ENCODE measurements at regions of chr3 and their contacts with region 1.

Region 1: DNA sequence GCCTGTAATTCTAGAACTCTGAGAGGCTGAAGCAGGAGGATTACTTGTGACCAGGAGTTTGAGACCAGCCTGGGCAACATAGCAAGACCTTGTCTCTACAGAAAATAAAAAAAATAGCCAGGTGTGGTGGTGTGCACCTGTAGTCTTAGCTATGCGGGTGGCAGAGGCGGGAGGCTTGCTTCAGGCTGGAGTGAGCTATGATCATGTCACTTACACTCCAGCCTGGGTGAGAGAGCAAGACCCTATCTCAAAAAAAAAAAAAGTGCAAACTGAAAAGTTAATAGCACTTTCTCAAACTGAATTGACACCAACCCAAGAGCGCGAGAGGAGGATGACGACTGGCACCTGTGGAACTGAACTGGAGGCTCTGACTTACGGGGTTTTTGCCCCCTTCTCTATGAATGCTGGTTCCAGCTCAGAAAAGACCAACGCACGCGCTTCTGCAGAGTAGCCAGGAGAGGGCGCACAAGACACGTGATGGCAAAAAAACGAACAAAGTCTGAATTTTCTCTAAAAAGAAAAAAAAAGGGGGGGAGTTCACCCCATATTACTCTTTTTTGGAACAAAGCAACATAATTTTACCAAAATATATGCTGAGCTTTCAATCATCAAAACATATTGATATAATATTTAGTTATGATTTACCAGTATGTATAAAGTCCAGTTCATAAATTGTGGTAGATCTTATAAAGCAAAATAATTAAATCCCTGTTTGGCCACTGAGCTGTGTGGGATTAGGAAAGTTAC is 23.7 kb downstream of the CFAP92 start:
- DNase-seq: peak; percentile 80
- ATAC-seq: peak; percentile 64
- H3K4me3 ChIP-seq: no peak overlapping the region
- H3K4me3 Mint-ChIP-seq: no peak overlapping the region
- H3K27ac ChIP-seq: no peak overlapping the region
- H3K27ac Mint-ChIP-seq: no peak overlapping the region
- H3K4me1 ChIP-seq: peaks cover 14 to 15% of the 10 kb centered on the region in 2 donors
- H3K4me1 Mint-ChIP-seq: peaks cover 11% of the 10 kb centered on the region
- H3K27me3 ChIP-seq: no peaks in the 10 kb centered on the region
- H3K27me3 Mint-ChIP-seq: peaks cover 4% of the 10 kb centered on the region
- CTCF ChIP-seq: peak; percentile 97

Region 2: DNA sequence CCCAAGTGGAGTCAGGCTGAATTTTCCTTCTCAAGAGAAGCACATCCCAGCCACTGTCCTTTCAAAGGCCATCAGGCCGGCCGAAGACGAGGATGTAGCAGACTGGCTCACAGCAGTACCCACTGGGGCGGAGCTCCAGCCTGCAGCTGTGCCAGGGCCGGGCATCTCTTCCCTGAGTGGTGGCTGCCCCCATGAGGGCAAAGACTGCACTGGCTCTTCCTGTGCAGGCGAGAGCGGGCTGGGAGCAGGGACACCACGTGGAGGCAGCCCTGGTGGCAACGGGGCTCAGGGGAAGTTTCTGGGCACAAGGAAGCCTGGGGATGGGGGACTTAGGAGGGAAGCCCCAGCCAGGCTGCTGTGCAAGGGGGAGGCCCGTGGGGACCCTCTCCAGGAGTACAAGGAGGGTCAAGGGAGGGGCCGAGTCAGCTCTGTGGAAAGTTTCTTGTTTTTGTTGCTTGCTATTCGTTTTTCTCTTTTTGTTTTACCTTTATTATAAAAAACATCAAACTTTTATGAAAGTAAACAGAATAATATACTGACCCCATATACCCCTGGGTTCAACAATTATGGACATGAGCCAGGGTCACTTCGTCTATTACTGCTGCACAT is 385.6 kb before region 1 on chr3:
- CTCF ChIA-PET with region 1: no interaction called
- POLR2A ChIA-PET with region 1: no interaction called
- intact Hi-C with region 1: no loop called
- DNase-seq: peak; percentile 26
- ATAC-seq: peak; percentile 56
- H3K4me3 ChIP-seq: no peak overlapping the region
- H3K4me3 Mint-ChIP-seq: no peak overlapping the region
- H3K27ac ChIP-seq: no peak overlapping the region
- H3K27ac Mint-ChIP-seq: no peak overlapping the region
- H3K4me1 ChIP-seq: peaks cover 0 to 4% of the 10 kb centered on the region in 2 donors
- H3K4me1 Mint-ChIP-seq: no peaks in the 10 kb centered on the region
- H3K27me3 ChIP-seq: peaks cover 0 to 6% (median 0%) of the 10 kb centered on the region in 4 experiments
- H3K27me3 Mint-ChIP-seq: peaks cover 13% of the 10 kb centered on the region
- CTCF ChIP-seq: peak; percentile 10

Region 3: GRCh38 chr3:128824132-128824850 is 145.9 kb before region 1 on chr3:
- CTCF ChIA-PET with region 1: no interaction called
- POLR2A ChIA-PET with region 1: no interaction called
- intact Hi-C with region 1: no loop called
- DNase-seq: no peak
- ATAC-seq: no peak
- H3K4me3 ChIP-seq: no peak overlapping the region
- H3K4me3 Mint-ChIP-seq: no peak overlapping the region
- H3K27ac ChIP-seq: no peak overlapping the region
- H3K27ac Mint-ChIP-seq: no peak overlapping the region
- H3K4me1 ChIP-seq: no peaks in the 10 kb centered on the region
- H3K4me1 Mint-ChIP-seq: no peaks in the 10 kb centered on the region
- H3K27me3 ChIP-seq: no peaks in the 10 kb centered on the region
- H3K27me3 Mint-ChIP-seq: no peaks in the 10 kb centered on the region
- CTCF ChIP-seq: no peak

Region 4: DNA sequence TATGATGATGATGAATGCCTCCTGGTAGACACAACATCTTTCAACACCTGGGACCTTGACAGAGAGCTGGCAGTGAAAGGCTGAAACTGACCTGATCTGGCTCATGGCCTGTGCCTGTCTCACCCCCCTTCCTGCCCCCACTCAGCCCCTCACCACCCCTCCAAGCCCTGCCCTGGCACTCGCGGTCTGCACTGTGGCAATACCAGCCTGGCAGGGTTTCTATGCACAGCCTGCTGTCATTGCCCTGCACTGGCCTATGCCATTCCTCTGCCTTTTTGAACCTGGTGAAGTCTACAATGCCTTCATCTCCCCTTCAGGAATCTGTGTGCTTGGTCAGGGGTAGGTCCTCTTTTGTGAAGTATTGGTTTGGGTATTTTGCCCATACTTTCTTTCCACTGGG is 34.2 kb before region 1 on chr3:
- CTCF ChIA-PET with region 1: no interaction called
- POLR2A ChIA-PET with region 1: no interaction called
- intact Hi-C with region 1: no loop called
- DNase-seq: no peak
- ATAC-seq: no peak
- H3K4me3 ChIP-seq: no peak overlapping the region
- H3K4me3 Mint-ChIP-seq: no peak overlapping the region
- H3K27ac ChIP-seq: no peak overlapping the region
- H3K27ac Mint-ChIP-seq: no peak overlapping the region
- H3K4me1 ChIP-seq: no peaks in the 10 kb centered on the region
- H3K4me1 Mint-ChIP-seq: no peaks in the 10 kb centered on the region
- H3K27me3 ChIP-seq: peaks cover 0 to 5% (median 0%) of the 10 kb centered on the region in 4 experiments
- H3K27me3 Mint-ChIP-seq: peaks cover 20% of the 10 kb centered on the region
- CTCF ChIP-seq: no peak

Region 5: GRCh38 chr3:128984596-128984995 is 14.4 kb after region 1 on chr3:
- CTCF ChIA-PET with region 1: interaction called, 10 read pairs
- POLR2A ChIA-PET with region 1: no interaction called
- intact Hi-C with region 1: no loop called
- DNase-seq: no peak
- ATAC-seq: no peak
- H3K4me3 ChIP-seq: no peak overlapping the region
- H3K4me3 Mint-ChIP-seq: no peak overlapping the region
- H3K27ac ChIP-seq: no peak overlapping the region
- H3K27ac Mint-ChIP-seq: no peak overlapping the region
- H3K4me1 ChIP-seq: no peaks in the 10 kb centered on the region
- H3K4me1 Mint-ChIP-seq: peaks cover 2% of the 10 kb centered on the region
- H3K27me3 ChIP-seq: peaks cover 0 to 3% (median 0%) of the 10 kb centered on the region in 4 experiments
- H3K27me3 Mint-ChIP-seq: peaks cover 11% of the 10 kb centered on the region
- CTCF ChIP-seq: no peak

Region 6: DNA sequence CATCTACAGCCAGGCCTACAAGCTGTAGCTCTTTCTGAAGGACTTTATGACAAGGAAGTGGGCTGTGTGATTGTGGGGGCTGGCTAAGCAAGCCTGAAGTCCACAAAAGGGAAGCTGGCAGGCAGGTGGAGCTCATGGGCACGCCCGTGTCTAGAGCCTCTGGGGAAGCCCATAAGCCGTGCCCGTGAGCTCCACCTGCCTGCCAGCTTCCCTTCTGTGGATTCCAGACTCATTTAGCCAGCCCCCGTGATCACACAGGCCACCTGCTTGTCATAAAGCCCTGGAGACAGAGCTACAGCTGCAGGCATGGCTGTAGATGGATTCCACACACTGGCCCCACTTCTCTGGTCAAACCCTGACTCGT is 46.2 kb after region 1 on chr3:
- CTCF ChIA-PET with region 1: interaction called, 134 read pairs
- POLR2A ChIA-PET with region 1: interaction called, 8 read pairs
- intact Hi-C with region 1: loop called (anchors 1 kb)
- DNase-seq: peak; percentile 92
- ATAC-seq: peak; percentile 86
- H3K4me3 ChIP-seq: peak overlapping the region in 3 of 5 experiments; percentile 5 to 28 (median 18)
- H3K4me3 Mint-ChIP-seq: peak overlapping the region; percentile 79
- H3K27ac ChIP-seq: peak overlapping the region; percentile 85 to 96
- H3K27ac Mint-ChIP-seq: peak overlapping the region; percentile 97
- H3K4me1 ChIP-seq: peaks cover 33 to 35% of the 10 kb centered on the region in 2 donors
- H3K4me1 Mint-ChIP-seq: peaks cover 41% of the 10 kb centered on the region
- H3K27me3 ChIP-seq: no peaks in the 10 kb centered on the region
- H3K27me3 Mint-ChIP-seq: no peaks in the 10 kb centered on the region
- CTCF ChIP-seq: peak; percentile 41

Region 7: DNA sequence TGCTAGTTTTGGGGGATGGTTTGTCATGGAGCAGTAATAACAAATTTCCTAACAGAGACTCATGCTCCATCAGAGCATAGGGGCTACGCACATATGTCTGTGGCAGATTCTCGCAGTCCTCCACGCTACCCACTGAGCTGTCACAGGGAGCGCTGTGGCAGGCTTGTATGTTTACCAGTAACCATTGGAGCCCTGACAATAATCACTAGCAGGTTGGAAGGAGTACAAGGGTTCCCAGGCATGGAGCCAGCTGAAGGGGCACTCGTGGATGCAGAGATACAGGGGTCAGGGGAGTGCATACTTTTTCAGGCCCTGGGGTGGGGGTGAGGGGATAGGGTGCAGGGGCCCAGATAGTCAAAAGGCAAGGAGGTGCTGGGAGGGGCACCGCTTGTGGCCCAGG is 82.5 kb after region 1 on chr3:
- CTCF ChIA-PET with region 1: interaction called, 92 read pairs
- POLR2A ChIA-PET with region 1: no interaction called
- intact Hi-C with region 1: loop called (anchors 1 kb)
- DNase-seq: no peak
- ATAC-seq: no peak
- H3K4me3 ChIP-seq: no peak overlapping the region
- H3K4me3 Mint-ChIP-seq: no peak overlapping the region
- H3K27ac ChIP-seq: no peak overlapping the region
- H3K27ac Mint-ChIP-seq: no peak overlapping the region
- H3K4me1 ChIP-seq: peaks cover 4 to 7% of the 10 kb centered on the region in 2 donors
- H3K4me1 Mint-ChIP-seq: peaks cover 7% of the 10 kb centered on the region
- H3K27me3 ChIP-seq: peaks cover 0 to 10% (median 2%) of the 10 kb centered on the region in 4 experiments
- H3K27me3 Mint-ChIP-seq: peaks cover 31% of the 10 kb centered on the region
- CTCF ChIP-seq: no peak

Region 8: DNA sequence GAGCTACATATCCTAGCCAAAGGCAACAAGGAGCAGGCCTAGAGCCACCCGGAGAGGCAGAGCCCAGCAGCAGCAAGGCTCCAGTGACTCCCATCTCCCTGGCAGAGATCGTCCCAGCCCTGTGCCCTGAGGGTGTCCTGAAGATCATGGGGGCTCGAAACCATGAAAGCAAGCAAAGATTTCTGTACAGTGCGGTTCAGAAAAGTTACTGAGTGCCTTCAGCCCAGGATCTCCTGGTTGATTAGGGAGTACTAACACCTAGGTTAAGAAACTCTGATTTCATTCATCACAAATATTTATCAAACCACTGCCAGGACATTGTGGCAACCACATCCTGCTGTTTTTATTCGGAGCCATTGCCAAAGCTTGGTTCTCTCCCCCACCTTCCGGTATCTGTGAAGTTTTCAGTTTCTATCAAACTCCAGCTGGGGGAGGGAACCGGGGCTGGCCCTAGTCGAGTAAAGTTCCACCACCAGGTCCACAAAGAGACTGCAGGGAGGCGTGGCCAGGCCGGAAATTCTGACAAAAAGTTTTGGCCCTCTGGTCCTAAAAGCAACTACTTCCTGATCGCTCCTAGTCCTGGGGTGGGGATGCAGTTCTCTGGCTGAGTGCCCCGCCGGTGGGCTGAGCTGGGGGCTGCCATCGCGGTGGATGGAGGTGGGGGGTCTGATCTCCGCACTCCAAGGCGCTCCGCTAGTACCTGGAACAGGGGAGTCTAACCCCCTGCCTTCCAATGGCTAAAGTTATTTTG is 150.3 kb after region 1 on chr3:
- CTCF ChIA-PET with region 1: interaction called, 32 read pairs
- POLR2A ChIA-PET with region 1: interaction called, 3 read pairs
- intact Hi-C with region 1: no loop called
- DNase-seq: peak; percentile 93
- ATAC-seq: peak; percentile 61
- H3K4me3 ChIP-seq: peak overlapping the region; percentile 68 to 81 (median 76)
- H3K4me3 Mint-ChIP-seq: peak overlapping the region; percentile 88
- H3K27ac ChIP-seq: peak overlapping the region; percentile 61 to 62
- H3K27ac Mint-ChIP-seq: peak overlapping the region; percentile 84
- H3K4me1 ChIP-seq: peaks cover 42 to 46% of the 10 kb centered on the region in 2 donors
- H3K4me1 Mint-ChIP-seq: peaks cover 53% of the 10 kb centered on the region
- H3K27me3 ChIP-seq: no peaks in the 10 kb centered on the region
- H3K27me3 Mint-ChIP-seq: no peaks in the 10 kb centered on the region
- CTCF ChIP-seq: peak; percentile 30

Region 9: DNA sequence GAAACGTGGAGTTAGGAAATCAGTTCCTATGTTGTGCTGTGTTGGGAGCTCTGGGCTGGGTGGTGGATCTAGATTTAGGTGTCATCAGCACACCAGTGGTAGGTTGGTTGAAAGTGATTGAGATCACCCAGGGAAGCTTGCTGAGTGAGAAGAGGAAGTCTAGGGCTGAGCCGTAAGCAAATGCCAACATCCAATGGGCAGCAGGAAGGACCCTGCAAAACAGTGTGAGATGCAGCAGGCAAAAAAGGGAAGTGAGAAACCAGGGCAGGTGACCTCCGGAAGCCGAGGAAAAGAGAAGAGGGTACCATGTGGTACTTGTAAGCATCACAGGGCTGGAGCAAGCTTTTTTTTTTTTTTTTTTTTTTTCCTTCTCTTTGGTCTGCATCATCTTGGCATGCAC is 263.4 kb after region 1 on chr3:
- CTCF ChIA-PET with region 1: interaction called, 11 read pairs
- POLR2A ChIA-PET with region 1: no interaction called
- intact Hi-C with region 1: no loop called
- DNase-seq: peak; percentile 95
- ATAC-seq: peak; percentile 94
- H3K4me3 ChIP-seq: no peak overlapping the region
- H3K4me3 Mint-ChIP-seq: peak overlapping the region; percentile 50
- H3K27ac ChIP-seq: peak overlapping the region; percentile 71 to 87
- H3K27ac Mint-ChIP-seq: peak overlapping the region; percentile 97
- H3K4me1 ChIP-seq: peaks cover 28 to 36% of the 10 kb centered on the region in 2 donors
- H3K4me1 Mint-ChIP-seq: peaks cover 47% of the 10 kb centered on the region
- H3K27me3 ChIP-seq: no peaks in the 10 kb centered on the region
- H3K27me3 Mint-ChIP-seq: no peaks in the 10 kb centered on the region
- CTCF ChIP-seq: no peak

Region 10: DNA sequence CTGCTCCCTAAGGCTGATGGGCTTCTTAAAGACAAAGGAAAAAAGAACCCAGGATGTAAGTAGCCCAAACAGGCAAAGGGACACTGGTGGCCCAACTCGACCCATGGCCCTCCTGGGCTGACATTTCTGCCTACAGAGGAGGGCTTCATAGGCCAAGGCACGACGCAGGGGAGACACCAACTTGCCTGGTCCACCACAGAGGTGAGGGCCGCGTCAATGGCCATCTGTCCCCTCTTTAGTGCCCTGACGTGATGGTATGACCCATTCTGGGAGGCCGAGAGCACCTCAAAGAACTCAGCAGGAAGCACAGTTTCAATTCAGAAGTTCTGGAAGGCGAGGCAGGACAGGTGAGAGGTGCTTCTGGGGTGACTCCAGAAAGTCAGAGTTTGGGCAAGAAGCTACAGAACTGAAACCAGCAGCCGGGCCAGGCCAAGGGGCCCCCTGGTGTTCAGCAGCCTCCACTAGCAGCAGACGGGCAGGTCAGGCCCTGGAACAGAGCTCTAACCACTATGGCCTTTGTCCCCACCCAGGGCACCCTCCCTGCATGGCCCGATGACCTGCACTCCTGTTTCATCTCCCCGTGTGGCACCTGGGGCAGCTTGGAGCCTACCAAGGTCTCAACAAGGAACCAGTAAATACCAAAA is 353.6 kb after region 1 on chr3:
- CTCF ChIA-PET with region 1: interaction called, 41 read pairs
- POLR2A ChIA-PET with region 1: no interaction called
- intact Hi-C with region 1: loop called (anchors 1 kb)
- DNase-seq: peak; percentile 69
- ATAC-seq: peak; percentile 82
- H3K4me3 ChIP-seq: no peak overlapping the region
- H3K4me3 Mint-ChIP-seq: no peak overlapping the region
- H3K27ac ChIP-seq: no peak overlapping the region
- H3K27ac Mint-ChIP-seq: no peak overlapping the region
- H3K4me1 ChIP-seq: peaks cover 2 to 5% of the 10 kb centered on the region in 2 donors
- H3K4me1 Mint-ChIP-seq: peaks cover 3% of the 10 kb centered on the region
- H3K27me3 ChIP-seq: peaks cover 0 to 12% (median 6%) of the 10 kb centered on the region in 4 experiments
- H3K27me3 Mint-ChIP-seq: peaks cover 5% of the 10 kb centered on the region
- CTCF ChIP-seq: peak; percentile 50